Activated CD8-positive, alpha-beta T cell treated with anti-CD3 and anti-CD28 coated beads, Interleukin-2, amount 10 ng/mL, durations not matched to agents 7 days and 5 days (primary cell): ENCODE measurements at regions of chr2 and their contacts with region 1.

Region 1: GRCh38 chr2:231925303-231926179 is 655 bp downstream of the NPPC start:
- DNase-seq: peak; percentile 78
- ATAC-seq: peak; percentile 68
- H3K4me3 Mint-ChIP-seq: peak overlapping the region; percentile 60
- H3K27ac Mint-ChIP-seq: no peak overlapping the region
- H3K4me1 Mint-ChIP-seq: peaks cover 14% of the 10 kb centered on the region
- H3K27me3 Mint-ChIP-seq: peaks cover 34% of the 10 kb centered on the region

Region 2: DNA sequence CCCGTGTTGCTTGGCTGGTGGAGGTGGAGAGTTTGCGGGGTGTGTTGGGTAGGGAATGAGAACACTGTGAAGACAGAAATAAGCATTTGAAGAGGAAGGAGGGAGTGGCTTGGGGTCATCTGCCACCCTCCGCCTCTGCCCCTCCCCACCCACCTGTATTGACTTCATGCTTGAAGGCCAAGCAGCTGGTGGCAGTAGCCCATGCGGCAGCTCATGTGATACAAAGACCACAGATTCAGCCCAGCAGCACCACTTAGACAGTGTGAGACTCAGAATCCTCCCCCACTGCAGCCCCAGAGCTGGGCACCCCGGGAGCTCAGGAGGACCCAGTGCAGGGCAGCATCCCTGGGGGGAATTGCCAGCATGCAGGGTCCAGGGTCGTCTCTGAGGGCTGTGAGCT is 14.8 kb before region 1 on chr2:
- CTCF ChIA-PET with region 1: interaction called, 19 read pairs
- POLR2A ChIA-PET with region 1: no interaction called
- DNase-seq: no peak
- ATAC-seq: no peak
- H3K4me3 Mint-ChIP-seq: no peak overlapping the region
- H3K27ac Mint-ChIP-seq: peak overlapping the region; percentile 63
- H3K4me1 Mint-ChIP-seq: peaks cover 33% of the 10 kb centered on the region
- H3K27me3 Mint-ChIP-seq: peaks cover 3% of the 10 kb centered on the region

Region 3: GRCh38 chr2:232042911-232043564 is 117.5 kb after region 1 on chr2:
- CTCF ChIA-PET with region 1: no interaction called
- POLR2A ChIA-PET with region 1: no interaction called
- DNase-seq: no peak
- ATAC-seq: no peak
- H3K4me3 Mint-ChIP-seq: no peak overlapping the region
- H3K27ac Mint-ChIP-seq: no peak overlapping the region
- H3K4me1 Mint-ChIP-seq: peaks cover 7% of the 10 kb centered on the region
- H3K27me3 Mint-ChIP-seq: no peaks in the 10 kb centered on the region